AG04450 (cell line): ENCODE measurements at regions of chr5 and their contacts with region 1.

Region 1: DNA sequence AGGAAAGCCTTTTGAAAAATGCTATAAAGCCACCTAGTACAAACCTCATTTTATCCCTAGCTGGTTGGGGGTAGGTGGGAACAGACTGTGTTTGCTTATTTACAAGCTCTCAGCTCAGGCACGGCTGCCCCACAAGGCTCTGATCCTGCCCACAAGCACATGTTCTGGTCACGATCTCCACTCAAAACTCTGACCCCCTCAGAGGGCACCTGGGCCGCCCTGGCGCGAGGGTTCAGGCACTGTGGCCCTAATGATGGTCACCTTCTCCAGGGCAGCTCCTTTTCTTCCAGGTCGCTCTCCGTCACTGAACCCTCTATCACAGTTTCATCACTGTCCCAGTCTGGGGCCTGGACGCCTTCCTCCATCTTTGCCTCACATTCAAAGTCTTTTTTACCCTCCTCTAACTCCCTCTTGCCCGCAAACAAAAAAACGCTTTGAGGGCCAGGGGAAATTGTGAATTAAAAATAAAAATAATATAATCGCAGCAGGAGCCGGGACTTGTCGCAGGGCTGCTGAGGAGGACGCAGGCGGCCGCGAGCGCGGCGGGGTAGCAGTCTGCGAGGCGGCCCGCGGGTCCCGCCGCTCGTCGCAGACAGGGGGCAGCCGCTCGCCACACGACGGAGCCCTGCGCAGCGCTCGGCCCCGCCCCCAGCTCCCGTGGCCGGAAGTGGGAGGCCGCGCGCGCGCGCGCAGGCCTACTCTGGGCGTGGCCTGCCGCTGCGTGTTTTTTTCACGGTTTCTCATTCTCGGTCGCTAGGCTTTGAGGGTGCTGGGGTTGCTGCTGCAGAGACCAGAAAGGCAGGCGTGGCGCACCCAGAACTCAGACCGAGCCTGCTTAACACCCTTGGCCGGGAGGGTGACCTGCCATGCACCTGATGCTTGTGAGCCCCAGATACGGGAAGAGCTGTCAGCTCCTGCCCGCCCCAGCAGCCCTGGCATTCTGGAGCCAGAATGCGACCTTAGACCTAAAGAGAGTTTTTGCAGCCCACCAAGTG is at the start of gene ANKRD31:
- DNase-seq: peak; percentile 18
- H3K4me3 ChIP-seq: peak within 1 kb of the TSS; percentile 91
- H3K27ac ChIP-seq: no peak within 1 kb of the TSS
- H3K27me3 ChIP-seq: no peaks in the 10 kb centered on the region
- CTCF ChIP-seq: peak; percentile 57
- polyA plus RNA-seq, gene ANKRD31: 0.02 and 0.06 TPM in 2 replicates

Region 2: GRCh38 chr5:74993743-74994142 is 242.9 kb before region 1 on chr5:
- CTCF ChIA-PET with region 1: no interaction called
- POLR2A ChIA-PET with region 1: no interaction called
- DNase-seq: no peak
- H3K4me3 ChIP-seq: no peak overlapping the region
- H3K27ac ChIP-seq: no peak overlapping the region
- H3K27me3 ChIP-seq: peaks cover 2% of the 10 kb centered on the region
- CTCF ChIP-seq: no peak

Region 3: GRCh38 chr5:75049456-75050351 is 186.9 kb before region 1 on chr5:
- CTCF ChIA-PET with region 1: interaction called, 20 read pairs
- POLR2A ChIA-PET with region 1: no interaction called
- DNase-seq: no peak
- H3K4me3 ChIP-seq: no peak overlapping the region
- H3K27ac ChIP-seq: no peak overlapping the region
- H3K27me3 ChIP-seq: peaks cover 5% of the 10 kb centered on the region
- CTCF ChIP-seq: peak; percentile 77

Region 4: GRCh38 chr5:75225506-75225905 is 11.1 kb before region 1 on chr5:
- CTCF ChIA-PET with region 1: interaction called, 13 read pairs
- POLR2A ChIA-PET with region 1: no interaction called
- DNase-seq: no peak
- H3K4me3 ChIP-seq: no peak overlapping the region
- H3K27ac ChIP-seq: no peak overlapping the region
- H3K27me3 ChIP-seq: no peaks in the 10 kb centered on the region
- CTCF ChIP-seq: no peak

Region 5: GRCh38 chr5:75320341-75320740 is 83.7 kb after region 1 on chr5:
- CTCF ChIA-PET with region 1: interaction called, 11 read pairs
- POLR2A ChIA-PET with region 1: no interaction called
- DNase-seq: no peak
- H3K4me3 ChIP-seq: no peak overlapping the region
- H3K27ac ChIP-seq: no peak overlapping the region
- H3K27me3 ChIP-seq: no peaks in the 10 kb centered on the region
- CTCF ChIP-seq: no peak

Region 6: GRCh38 chr5:75336625-75337339 is 100.2 kb after region 1 on chr5 and contains the start of gene HMGCR:
- CTCF ChIA-PET with region 1: interaction called, 23 read pairs
- POLR2A ChIA-PET with region 1: interaction called, 8 read pairs
- DNase-seq: peak; percentile 98
- H3K4me3 ChIP-seq: peak within 1 kb of the TSS; percentile 91
- H3K27ac ChIP-seq: peak within 1 kb of the TSS; percentile 84
- H3K27me3 ChIP-seq: no peaks in the 10 kb centered on the region
- CTCF ChIP-seq: no peak
- polyA plus RNA-seq, gene HMGCR: 25.3 and 27.7 TPM in 2 replicates

Region 7: GRCh38 chr5:75519761-75520160 is 283.1 kb after region 1 on chr5:
- CTCF ChIA-PET with region 1: no interaction called
- POLR2A ChIA-PET with region 1: no interaction called
- DNase-seq: no peak
- H3K4me3 ChIP-seq: no peak overlapping the region
- H3K27ac ChIP-seq: no peak overlapping the region
- H3K27me3 ChIP-seq: no peaks in the 10 kb centered on the region
- CTCF ChIP-seq: no peak

Region 8: DNA sequence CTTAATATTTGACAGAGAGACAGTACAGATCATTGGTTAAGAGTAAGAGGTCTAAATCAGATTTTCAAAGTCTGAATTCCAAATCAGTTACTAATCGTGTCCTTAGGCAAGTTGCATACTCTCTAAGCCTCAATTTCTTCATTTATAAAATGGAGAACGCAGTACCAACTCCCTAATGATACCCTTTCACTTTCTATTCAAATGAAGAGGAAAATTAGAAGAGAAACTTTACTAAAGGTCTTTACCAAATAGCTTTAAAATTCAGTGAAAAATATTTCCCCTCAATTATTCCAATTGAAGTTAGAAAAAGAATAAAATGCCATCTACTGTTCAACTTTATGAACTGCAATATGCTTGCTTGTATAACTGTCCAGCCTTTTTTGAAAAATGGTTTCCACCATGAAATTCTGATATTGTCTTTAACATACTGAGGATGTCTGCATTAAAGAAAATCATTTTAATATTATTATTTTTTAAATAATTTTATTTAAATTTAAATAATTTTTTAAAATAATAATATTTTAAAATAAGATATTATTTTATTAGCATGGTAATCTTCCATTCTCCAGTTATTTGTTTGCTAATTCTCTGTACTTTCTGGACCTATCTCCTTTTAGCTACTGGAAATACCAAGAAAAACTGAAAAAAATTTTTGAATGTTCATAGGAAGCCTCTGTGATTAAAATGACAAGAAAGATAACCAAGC is 444.7 kb after region 1 on chr5:
- CTCF ChIA-PET with region 1: interaction called, 15 read pairs
- POLR2A ChIA-PET with region 1: no interaction called
- DNase-seq: no peak
- H3K4me3 ChIP-seq: no peak overlapping the region
- H3K27ac ChIP-seq: no peak overlapping the region
- H3K27me3 ChIP-seq: no peaks in the 10 kb centered on the region
- CTCF ChIP-seq: peak; percentile 67

Region 9: GRCh38 chr5:76175051-76175666 is 938.5 kb after region 1 on chr5:
- CTCF ChIA-PET with region 1: interaction called, 29 read pairs
- POLR2A ChIA-PET with region 1: no interaction called
- DNase-seq: peak; percentile 7
- H3K4me3 ChIP-seq: no peak overlapping the region
- H3K27ac ChIP-seq: no peak overlapping the region
- H3K27me3 ChIP-seq: no peaks in the 10 kb centered on the region
- CTCF ChIP-seq: peak; percentile 84